CD4-positive, alpha-beta memory T cell (primary cell): ENCODE measurements at regions of chr18 and their contacts with region 1.

Region 1: GRCh38 chr18:12702221-12703095 is at the starts of genes CEP76 and PSMG2:
- DNase-seq: peak; percentile 84 to 90 (median 87)
- H3K4me3 ChIP-seq: peak within 1 kb of the TSS; percentile 82 to 99
- H3K4me3 Mint-ChIP-seq: peak within 1 kb of the TSS; percentile 87 to 100 (median 98)
- H3K27ac ChIP-seq: peak within 1 kb of the TSS; percentile 93
- H3K27ac Mint-ChIP-seq: peak within 1 kb of the TSS; percentile 89 to 100 (median 96)
- H3K4me1 ChIP-seq: peaks cover 46% of the 10 kb centered on the region
- H3K4me1 Mint-ChIP-seq: peaks cover 32 to 60% (median 48%) of the 10 kb centered on the region in 4 donors
- H3K27me3 ChIP-seq: no peaks in the 10 kb centered on the region
- H3K27me3 Mint-ChIP-seq: no peaks in the 10 kb centered on the region
- total RNA-seq, gene CEP76: 9.9 to 13.1 TPM
- total RNA-seq, gene PSMG2: 59.7 to 62.0 TPM

Region 2: DNA sequence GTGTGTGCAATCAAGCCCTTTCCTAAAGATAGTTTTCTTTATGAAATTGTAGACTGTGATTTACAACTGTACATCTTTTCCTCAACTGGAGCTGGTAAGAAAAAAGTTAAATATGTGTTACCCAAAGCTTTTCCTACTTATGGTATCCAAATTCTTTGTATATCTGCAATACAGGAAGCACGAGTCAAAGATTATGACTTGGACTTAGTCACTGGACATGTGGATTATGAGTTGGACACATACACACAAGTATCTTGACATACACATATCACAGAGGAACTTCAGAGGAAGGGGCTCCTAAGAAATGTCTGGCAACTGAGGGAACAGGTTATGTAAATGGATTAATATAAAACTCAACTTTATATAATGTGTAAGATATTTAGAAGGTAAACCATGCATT is 259.5 kb before region 1 on chr18:
- CTCF ChIA-PET with region 1: no interaction called
- POLR2A ChIA-PET with region 1: no interaction called
- intact Hi-C with region 1: no loop called
- DNase-seq: no peak
- H3K4me3 ChIP-seq: no peak overlapping the region
- H3K4me3 Mint-ChIP-seq: no peak overlapping the region
- H3K27ac ChIP-seq: no peak overlapping the region
- H3K27ac Mint-ChIP-seq: no peak overlapping the region
- H3K4me1 ChIP-seq: no peaks in the 10 kb centered on the region
- H3K4me1 Mint-ChIP-seq: no peaks in the 10 kb centered on the region
- H3K27me3 ChIP-seq: no peaks in the 10 kb centered on the region
- H3K27me3 Mint-ChIP-seq: no peaks in the 10 kb centered on the region

Region 3: GRCh38 chr18:12470382-12471075 is 231.9 kb before region 1 on chr18:
- CTCF ChIA-PET with region 1: no interaction called
- POLR2A ChIA-PET with region 1: no interaction called
- intact Hi-C with region 1: no loop called
- DNase-seq: no peak
- H3K4me3 ChIP-seq: no peak overlapping the region
- H3K4me3 Mint-ChIP-seq: no peak overlapping the region
- H3K27ac ChIP-seq: no peak overlapping the region
- H3K27ac Mint-ChIP-seq: no peak overlapping the region
- H3K4me1 ChIP-seq: no peaks in the 10 kb centered on the region
- H3K4me1 Mint-ChIP-seq: no peaks in the 10 kb centered on the region
- H3K27me3 ChIP-seq: no peaks in the 10 kb centered on the region
- H3K27me3 Mint-ChIP-seq: no peaks in the 10 kb centered on the region

Region 4: GRCh38 chr18:12657684-12658425 is 44.6 kb before region 1 on chr18 and contains the start of gene SPIRE1:
- CTCF ChIA-PET with region 1: no interaction called
- POLR2A ChIA-PET with region 1: no interaction called
- intact Hi-C with region 1: loop called (anchors 2 kb)
- DNase-seq: peak in 4 of 5 donors; percentile 32 to 43 (median 39)
- H3K4me3 ChIP-seq: peak within 1 kb of the TSS; percentile 42 to 63
- H3K4me3 Mint-ChIP-seq: peak within 1 kb of the TSS; percentile 84 to 94 (median 92)
- H3K27ac ChIP-seq: no peak within 1 kb of the TSS
- H3K27ac Mint-ChIP-seq: peak within 1 kb of the TSS; percentile 11 to 87 (median 75)
- H3K4me1 ChIP-seq: peaks cover 9% of the 10 kb centered on the region
- H3K4me1 Mint-ChIP-seq: peaks cover 13 to 21% (median 17%) of the 10 kb centered on the region in 4 donors
- H3K27me3 ChIP-seq: no peaks in the 10 kb centered on the region
- H3K27me3 Mint-ChIP-seq: peaks cover 1 to 2% of the 10 kb centered on the region in 2 donors
- total RNA-seq, gene SPIRE1: 1.7 to 1.8 TPM

Region 5: DNA sequence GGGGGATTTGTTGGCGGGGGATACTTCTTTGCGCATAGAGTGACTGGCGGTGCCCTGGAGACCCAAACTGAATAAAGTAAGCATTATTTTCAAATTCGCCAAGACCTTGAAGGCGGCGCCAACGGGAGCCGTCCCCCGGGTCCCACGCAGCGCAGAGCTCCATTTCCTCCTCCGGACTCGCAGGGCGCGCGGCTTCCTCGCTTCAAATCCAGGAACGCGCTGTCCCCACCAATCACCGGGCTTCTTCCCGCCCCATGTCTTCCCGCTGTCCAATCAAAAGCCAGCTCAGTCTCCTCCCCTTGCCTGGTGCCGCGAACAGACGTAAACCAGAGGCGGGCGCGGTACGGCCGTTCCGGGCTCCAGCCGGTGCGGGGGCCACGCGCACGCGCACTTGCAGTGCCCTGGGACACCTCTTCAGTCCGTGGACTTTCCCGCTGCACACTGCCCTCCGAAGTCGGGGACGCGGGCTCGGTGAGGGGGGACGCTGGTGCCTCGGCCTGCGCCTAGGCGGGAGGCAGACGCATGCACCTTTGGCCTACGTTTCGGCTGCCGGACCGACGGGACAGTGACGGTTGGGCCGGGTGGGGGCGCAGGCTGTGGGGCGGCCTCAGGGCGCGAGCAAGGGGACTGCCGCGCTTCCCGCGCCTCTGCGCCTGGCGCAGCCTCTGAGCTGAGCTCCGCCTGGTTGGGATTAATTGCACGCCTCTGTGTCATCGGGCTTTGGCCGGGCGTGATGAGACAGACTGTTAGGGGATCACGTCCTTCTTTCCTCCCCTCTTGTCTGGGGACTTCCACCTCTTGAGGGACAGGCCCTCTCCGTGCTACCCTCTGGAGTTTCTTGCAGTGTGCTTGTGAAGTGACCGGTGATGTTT is 288.7 kb after region 1 on chr18 and contains the start of gene CEP192:
- CTCF ChIA-PET with region 1: no interaction called
- POLR2A ChIA-PET with region 1: interaction called, 11 read pairs
- intact Hi-C with region 1: loop called (anchors 2 kb)
- DNase-seq: peak; percentile 97 to 98 (median 98)
- H3K4me3 ChIP-seq: peak within 1 kb of the TSS; percentile 70 to 86
- H3K4me3 Mint-ChIP-seq: peak within 1 kb of the TSS; percentile 93 to 99 (median 98)
- H3K27ac ChIP-seq: peak within 1 kb of the TSS; percentile 93
- H3K27ac Mint-ChIP-seq: peak within 1 kb of the TSS; percentile 88 to 99 (median 97)
- H3K4me1 ChIP-seq: peaks cover 42% of the 10 kb centered on the region
- H3K4me1 Mint-ChIP-seq: peaks cover 0 to 29% (median 23%) of the 10 kb centered on the region in 4 donors
- H3K27me3 ChIP-seq: no peaks in the 10 kb centered on the region
- H3K27me3 Mint-ChIP-seq: no peaks in the 10 kb centered on the region
- total RNA-seq, gene CEP192: 42.5 to 45.5 TPM

Region 6: GRCh38 chr18:13726232-13726971 is 1023.9 kb after region 1 on chr18 and contains the starts of genes FAM210A and RNMT:
- CTCF ChIA-PET with region 1: no interaction called
- POLR2A ChIA-PET with region 1: no interaction called
- intact Hi-C with region 1: loop called (anchors 5 kb)
- DNase-seq: peak; percentile 90 to 95 (median 92)
- H3K4me3 ChIP-seq: peak within 1 kb of the TSS; percentile 76 to 78
- H3K4me3 Mint-ChIP-seq: peak within 1 kb of the TSS; percentile 87 to 97 (median 92)
- H3K27ac ChIP-seq: peak within 1 kb of the TSS; percentile 96
- H3K27ac Mint-ChIP-seq: peak within 1 kb of the TSS; percentile 85 to 98 (median 97)
- H3K4me1 ChIP-seq: peaks cover 49% of the 10 kb centered on the region
- H3K4me1 Mint-ChIP-seq: peaks cover 41 to 67% (median 51%) of the 10 kb centered on the region in 4 donors
- H3K27me3 ChIP-seq: no peaks in the 10 kb centered on the region
- H3K27me3 Mint-ChIP-seq: no peaks in the 10 kb centered on the region
- total RNA-seq, gene FAM210A: 9.4 to 10.2 TPM
- total RNA-seq, gene RNMT: 53.7 to 55.0 TPM